CD4-positive, alpha-beta memory T cell (primary cell): ENCODE measurements at regions of chr3 and their contacts with region 1.

Region 1: GRCh38 chr3:49469936-49470713 is at the start of gene DAG1:
- DNase-seq: peak; percentile 93 to 96 (median 95)
- H3K4me3 ChIP-seq: peak within 1 kb of the TSS; percentile 71 to 89
- H3K4me3 Mint-ChIP-seq: peak within 1 kb of the TSS; percentile 89 to 93 (median 91)
- H3K27ac ChIP-seq: peak within 1 kb of the TSS; percentile 87
- H3K27ac Mint-ChIP-seq: peak within 1 kb of the TSS; percentile 90 to 96 (median 95)
- H3K4me1 ChIP-seq: peaks cover 26% of the 10 kb centered on the region
- H3K4me1 Mint-ChIP-seq: peaks cover 15 to 28% (median 19%) of the 10 kb centered on the region in 4 donors
- H3K27me3 ChIP-seq: no peaks in the 10 kb centered on the region
- H3K27me3 Mint-ChIP-seq: no peaks in the 10 kb centered on the region
- total RNA-seq, gene DAG1: 15.3 to 18.0 TPM

Region 2: DNA sequence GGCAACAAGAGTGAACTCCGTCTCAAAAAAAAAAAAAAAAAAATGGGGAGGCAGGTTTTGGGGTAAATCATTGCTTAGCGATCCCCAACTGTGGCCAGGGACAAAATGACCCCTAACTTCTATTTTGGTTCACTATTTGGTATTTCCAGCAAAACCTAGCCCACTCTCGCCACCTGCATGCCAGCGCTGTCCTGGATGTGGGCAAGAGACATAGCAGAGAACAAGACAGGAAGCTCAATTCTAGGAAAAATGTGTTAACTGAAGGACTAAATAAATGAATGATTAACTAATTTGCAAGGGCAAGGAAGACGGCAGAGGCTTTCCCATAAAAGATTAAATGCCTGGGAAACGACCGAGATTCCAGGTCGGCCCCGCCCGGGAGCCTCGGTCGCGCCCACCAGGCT is 41.4 kb before region 1 on chr3:
- CTCF ChIA-PET with region 1: no interaction called
- POLR2A ChIA-PET with region 1: interaction called, 23 read pairs
- intact Hi-C with region 1: loop called (anchors 1 kb)
- DNase-seq: no peak
- H3K4me3 ChIP-seq: peak overlapping the region; percentile 55 to 86
- H3K4me3 Mint-ChIP-seq: peak overlapping the region; percentile 90 to 97 (median 95)
- H3K27ac ChIP-seq: peak overlapping the region; percentile 63
- H3K27ac Mint-ChIP-seq: peak overlapping the region; percentile 85 to 97 (median 94)
- H3K4me1 ChIP-seq: peaks cover 22% of the 10 kb centered on the region
- H3K4me1 Mint-ChIP-seq: peaks cover 8 to 33% (median 22%) of the 10 kb centered on the region in 4 donors
- H3K27me3 ChIP-seq: no peaks in the 10 kb centered on the region
- H3K27me3 Mint-ChIP-seq: no peaks in the 10 kb centered on the region

Region 3: DNA sequence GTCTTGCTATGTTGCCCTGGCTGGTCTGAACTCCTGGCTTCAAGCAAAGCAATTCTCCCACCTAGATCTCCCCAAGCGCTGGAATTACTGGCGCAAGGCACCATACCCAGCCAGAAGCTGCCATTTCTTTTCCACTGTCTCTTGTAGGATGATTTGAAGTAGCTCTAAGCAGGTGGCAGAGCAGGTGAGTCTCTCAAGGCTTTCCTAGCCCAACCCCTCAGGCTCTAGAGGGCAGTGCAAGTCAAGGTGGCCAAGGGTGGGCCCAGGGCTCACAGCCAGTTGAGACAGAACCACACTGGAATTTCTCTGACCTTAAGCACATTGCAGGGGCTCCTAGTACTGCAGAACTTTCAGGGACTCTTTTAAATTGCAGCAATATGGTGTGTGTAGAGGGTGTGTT is 15.7 kb before region 1 on chr3:
- CTCF ChIA-PET with region 1: interaction called, 13 read pairs
- POLR2A ChIA-PET with region 1: no interaction called
- intact Hi-C with region 1: no loop called
- DNase-seq: no peak
- H3K4me3 ChIP-seq: no peak overlapping the region
- H3K4me3 Mint-ChIP-seq: no peak overlapping the region
- H3K27ac ChIP-seq: no peak overlapping the region
- H3K27ac Mint-ChIP-seq: peak overlapping the region in 2 of 7 donors; percentile 19 to 60
- H3K4me1 ChIP-seq: no peaks in the 10 kb centered on the region
- H3K4me1 Mint-ChIP-seq: no peaks in the 10 kb centered on the region
- H3K27me3 ChIP-seq: no peaks in the 10 kb centered on the region
- H3K27me3 Mint-ChIP-seq: peaks cover 0 to 3% of the 10 kb centered on the region in 2 donors

Region 4: DNA sequence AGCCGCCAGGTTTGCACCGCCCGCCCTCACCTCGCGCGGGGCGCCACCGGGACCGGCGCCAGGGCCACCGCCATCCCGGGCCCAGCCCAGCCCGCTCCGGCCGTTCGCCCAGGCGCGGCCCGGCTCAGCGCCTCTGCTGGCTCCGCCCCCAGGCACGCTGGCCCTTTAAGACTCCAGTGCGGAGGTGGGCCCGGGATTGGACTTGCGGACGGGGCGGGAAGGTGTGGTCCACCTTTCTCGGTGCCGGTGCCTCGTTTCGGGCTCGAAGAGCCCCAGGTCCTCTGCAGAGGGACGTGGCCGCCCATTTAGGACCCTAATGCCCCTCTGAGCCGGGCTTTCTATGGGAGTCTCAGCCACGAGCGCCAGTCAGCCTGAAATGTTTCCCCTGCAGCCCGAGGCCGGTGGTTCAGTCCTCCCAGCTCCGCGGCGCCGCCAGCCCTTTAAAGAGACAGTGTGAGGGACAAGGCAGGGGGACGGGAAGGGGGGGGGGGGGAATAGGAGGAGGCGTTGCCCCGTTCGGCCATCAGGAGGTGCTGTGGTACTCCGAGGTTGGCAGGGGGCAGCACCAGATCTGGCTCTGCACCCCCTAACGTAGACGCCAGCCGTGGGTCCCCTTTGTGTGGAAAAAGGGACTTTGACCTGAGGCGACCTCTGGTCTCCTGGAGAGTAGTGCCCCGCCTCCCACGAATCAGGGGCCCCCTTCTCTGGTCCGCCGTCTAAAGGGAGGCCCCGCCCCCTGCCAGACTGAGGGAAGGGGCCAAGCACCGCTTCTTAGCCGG is 851.4 kb after region 1 on chr3:
- CTCF ChIA-PET with region 1: no interaction called
- POLR2A ChIA-PET with region 1: no interaction called
- intact Hi-C with region 1: loop called (anchors 5 kb)
- DNase-seq: peak; percentile 80 to 88 (median 83)
- H3K4me3 ChIP-seq: peak overlapping the region; percentile 23 to 87
- H3K4me3 Mint-ChIP-seq: peak overlapping the region; percentile 80 to 90 (median 86)
- H3K27ac ChIP-seq: peak overlapping the region; percentile 73
- H3K27ac Mint-ChIP-seq: peak overlapping the region; percentile 90 to 95 (median 93)
- H3K4me1 ChIP-seq: peaks cover 38% of the 10 kb centered on the region
- H3K4me1 Mint-ChIP-seq: peaks cover 18 to 57% (median 38%) of the 10 kb centered on the region in 4 donors
- H3K27me3 ChIP-seq: no peaks in the 10 kb centered on the region
- H3K27me3 Mint-ChIP-seq: no peaks in the 10 kb centered on the region